Right ventricle myocardium inferior (tissue), 1 donor: ENCODE measurements at regions of chr6 and their contacts with region 1.

Region 1: GRCh38 chr6:108966855-108967755 is 118.9 kb downstream of the ARMC2 start:
- DNase-seq: peak; percentile 73
- ATAC-seq: peak; percentile 63

Region 2: GRCh38 chr6:108635505-108636226 is 331.4 kb before region 1 on chr6:
- intact Hi-C with region 1: no loop called
- DNase-seq: no peak
- ATAC-seq: no peak

Region 3: DNA sequence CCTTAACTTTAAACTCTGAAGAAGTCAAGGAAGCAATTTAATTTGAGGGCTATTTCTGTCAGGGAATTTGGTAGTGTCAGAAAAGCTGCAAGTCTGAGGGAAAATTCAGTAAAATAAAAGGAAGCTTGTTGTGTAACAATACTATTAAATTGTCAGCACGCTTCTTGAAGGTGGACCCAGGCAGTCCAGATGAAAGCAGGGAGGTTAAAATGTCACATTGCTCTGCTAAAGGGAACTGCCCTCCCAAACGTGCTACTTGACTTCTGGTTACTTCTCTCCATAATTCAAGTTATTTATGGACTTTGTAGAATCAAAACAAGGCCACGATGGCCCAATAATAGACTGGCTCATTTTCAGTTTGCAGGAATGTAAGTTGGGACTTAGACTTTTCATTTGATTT is 147.1 kb before region 1 on chr6:
- intact Hi-C with region 1: no loop called
- DNase-seq: no peak
- ATAC-seq: no peak

Region 4: GRCh38 chr6:108848116-108848868 is 118.8 kb before region 1 on chr6 and contains the start of gene ARMC2:
- intact Hi-C with region 1: loop called (anchors 5 kb)
- DNase-seq: peak; percentile 98
- ATAC-seq: peak; percentile 98
- total RNA-seq, gene ARMC2: 9.5 TPM

Region 5: GRCh38 chr6:109095027-109095834 is 128.1 kb after region 1 on chr6 and contains the start of gene CEP57L1:
- intact Hi-C with region 1: loop called (anchors 1 kb)
- DNase-seq: peak; percentile 99
- ATAC-seq: peak; percentile 73
- total RNA-seq, gene CEP57L1: 7.7 TPM